ENCODE measurements at regions of chr15 and their contacts with region 1.

Region 1: DNA sequence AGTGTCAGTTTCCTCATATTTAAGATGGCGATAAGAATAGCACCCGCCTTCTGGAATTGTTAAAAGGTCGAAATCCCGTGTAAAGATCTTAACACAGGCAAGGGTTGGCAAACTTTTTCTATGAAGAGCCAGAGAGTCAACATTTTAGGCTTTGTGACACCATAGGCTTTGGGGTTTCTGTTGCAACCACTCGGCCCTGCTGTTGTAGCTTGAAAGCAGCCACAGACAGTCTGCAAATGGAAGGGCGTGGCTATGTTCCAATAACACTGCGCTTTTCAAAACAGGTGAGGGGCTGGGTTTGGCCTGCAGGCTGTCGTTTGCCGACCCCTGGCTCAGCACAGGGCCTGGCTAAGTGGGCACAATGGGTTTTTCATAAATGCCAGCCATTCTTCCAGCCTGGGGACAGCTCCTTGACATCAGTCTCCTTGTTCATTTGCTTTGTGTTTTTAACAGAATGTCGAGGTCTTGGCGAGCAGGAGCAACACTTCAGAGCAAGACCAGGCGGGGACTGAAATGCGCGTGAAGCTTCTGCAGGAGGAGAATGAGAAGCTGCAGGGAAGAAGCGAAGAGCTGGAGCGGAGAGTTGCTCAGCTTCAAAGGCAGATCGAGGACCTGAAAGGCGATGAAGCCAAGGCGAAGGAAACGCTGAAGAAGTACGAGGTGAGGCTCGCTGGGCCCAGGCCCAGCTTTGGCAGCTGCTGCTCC is 75.2 kb upstream of the MYZAP start:
- DNase-seq: no peak
- H3K4me3 ChIP-seq: no peak overlapping the region
- H3K27ac ChIP-seq: no peak overlapping the region
- H3K4me1 ChIP-seq: no peaks in the 10 kb centered on the region
- H3K27me3 ChIP-seq: no peaks in the 10 kb centered on the region
- CTCF ChIP-seq: no peak
- POLR2A ChIP-seq: no peak

Region 2: DNA sequence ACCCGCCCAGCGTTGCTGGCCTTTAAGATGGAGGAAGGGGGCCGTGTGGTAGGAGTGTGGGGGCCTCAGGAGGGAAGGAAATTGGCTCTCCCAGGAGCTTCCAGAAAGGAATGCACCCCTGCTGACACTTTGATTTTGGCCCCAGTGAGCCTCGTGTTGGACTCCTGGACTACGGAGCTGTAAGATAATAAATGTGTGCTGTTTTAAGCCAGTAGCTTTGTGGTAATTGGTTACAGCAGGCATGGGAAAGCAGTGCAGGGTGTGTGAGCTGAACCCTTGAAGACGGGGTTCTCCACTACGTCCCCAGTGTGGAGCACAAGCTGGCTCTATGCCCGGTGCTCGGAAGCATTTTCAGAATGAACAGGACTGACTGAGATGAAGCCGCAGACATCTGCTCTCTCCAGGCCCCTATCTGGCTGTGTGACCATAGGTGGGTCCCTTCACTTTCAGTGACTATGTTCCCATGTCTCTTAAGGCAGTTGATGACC is 163.1 kb before region 1 on chr15:
- intact Hi-C with region 1: loop called in 1 of 2 experiments (anchors 5 kb)
- DNase-seq: no peak
- H3K4me3 ChIP-seq: no peak overlapping the region
- H3K27ac ChIP-seq: no peak overlapping the region
- H3K4me1 ChIP-seq: no peaks in the 10 kb centered on the region
- H3K27me3 ChIP-seq: no peaks in the 10 kb centered on the region
- CTCF ChIP-seq: no peak
- POLR2A ChIP-seq: no peak

Region 3: DNA sequence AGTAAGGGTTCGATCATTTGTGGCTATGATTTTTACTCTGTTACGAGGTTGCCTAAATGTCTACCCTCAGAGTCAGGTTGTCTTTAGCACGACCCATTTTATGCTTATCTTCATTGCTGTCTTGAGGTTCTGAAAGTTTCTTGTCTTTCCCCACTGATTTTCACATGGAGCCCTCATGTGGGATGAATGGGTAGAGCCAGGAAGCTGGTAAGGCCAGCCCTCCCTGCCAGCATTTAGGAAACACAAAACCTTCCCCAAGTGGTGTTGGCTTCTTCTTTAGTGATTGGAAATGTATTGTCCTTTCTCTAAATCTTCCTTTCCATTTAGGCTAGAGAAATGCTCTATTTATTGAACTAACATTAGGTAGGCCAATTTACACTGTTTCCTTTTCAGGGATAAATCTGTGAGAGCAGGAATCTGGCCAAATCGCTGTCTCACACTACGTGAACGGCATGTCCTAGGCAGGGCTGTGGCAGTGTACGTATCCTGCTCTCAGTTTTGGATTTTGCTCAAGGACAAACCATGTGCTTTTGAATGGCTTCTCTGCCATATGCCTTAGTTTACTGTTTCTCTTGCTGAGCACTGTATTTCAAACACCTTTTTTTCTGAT is 118.9 kb after region 1 on chr15:
- intact Hi-C with region 1: no loop called
- DNase-seq: peak; percentile 42 to 83 (median 67)
- H3K4me3 ChIP-seq: no peak overlapping the region
- H3K27ac ChIP-seq: peak overlapping the region in 4 of 5 donors; percentile 33 to 71 (median 65)
- H3K4me1 ChIP-seq: peaks cover 7 to 27% of the 10 kb centered on the region in 2 donors
- H3K27me3 ChIP-seq: no peaks in the 10 kb centered on the region
- CTCF ChIP-seq: peak in 2 of 6 experiments; percentile 8 to 15
- POLR2A ChIP-seq: no peak

Measured in adrenal gland (tissue), 19 donors.